ENCODE measurements at regions of chr12 and their contacts with region 1.

Region 1: DNA sequence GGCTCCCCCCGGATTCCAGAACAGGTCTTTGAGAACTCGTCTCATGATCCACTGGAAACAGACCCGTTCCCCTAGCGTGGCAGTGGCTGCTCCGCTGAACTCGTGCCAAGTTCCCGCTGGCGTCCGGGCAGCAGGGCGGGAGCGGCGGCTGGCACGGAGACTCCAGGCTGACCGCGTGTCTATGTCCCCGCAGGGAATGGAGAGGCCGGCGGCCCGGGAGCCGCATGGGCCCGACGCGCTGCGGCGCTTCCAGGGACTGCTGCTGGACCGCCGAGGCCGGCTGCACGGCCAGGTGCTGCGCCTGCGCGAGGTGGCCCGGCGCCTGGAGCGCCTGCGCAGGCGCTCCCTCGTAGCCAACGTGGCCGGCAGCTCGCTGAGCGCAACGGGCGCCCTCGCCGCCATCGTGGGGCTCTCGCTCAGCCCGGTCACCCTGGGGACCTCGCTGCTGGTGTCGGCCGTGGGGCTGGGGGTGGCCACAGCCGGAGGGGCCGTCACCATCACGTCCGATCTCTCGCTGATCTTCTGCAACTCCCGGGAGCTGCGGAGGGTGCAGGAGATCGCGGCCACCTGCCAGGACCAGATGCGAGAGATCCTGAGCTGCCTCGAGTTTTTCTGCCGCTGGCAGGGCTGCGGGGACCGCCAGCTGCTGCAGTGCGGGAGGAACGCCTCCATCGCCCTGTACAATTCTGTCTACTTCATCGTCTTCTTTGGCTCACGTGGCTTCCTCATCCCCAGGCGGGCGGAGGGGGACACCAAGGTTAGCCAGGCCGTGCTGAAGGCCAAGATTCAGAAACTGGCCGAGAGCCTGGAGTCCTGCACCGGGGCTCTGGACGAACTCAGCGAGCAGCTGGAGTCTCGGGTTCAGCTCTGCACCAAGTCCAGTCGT is 1.5 kb downstream of the APOLD1 start:
- DNase-seq: peak; percentile 47 to 90 (median 71)
- ATAC-seq: peak; percentile 90
- H3K4me3 ChIP-seq: peak overlapping the region; percentile 68 to 70
- H3K4me3 Mint-ChIP-seq: peak overlapping the region; percentile 77
- H3K27ac ChIP-seq: peak overlapping the region; percentile 72 to 73
- H3K27ac Mint-ChIP-seq: peak overlapping the region; percentile 87
- H3K4me1 ChIP-seq: peaks cover 16% of the 10 kb centered on the region
- H3K4me1 Mint-ChIP-seq: peaks cover 22% of the 10 kb centered on the region
- H3K27me3 ChIP-seq: no peaks in the 10 kb centered on the region
- H3K27me3 Mint-ChIP-seq: no peaks in the 10 kb centered on the region
- CTCF ChIP-seq: no peak

Region 2: DNA sequence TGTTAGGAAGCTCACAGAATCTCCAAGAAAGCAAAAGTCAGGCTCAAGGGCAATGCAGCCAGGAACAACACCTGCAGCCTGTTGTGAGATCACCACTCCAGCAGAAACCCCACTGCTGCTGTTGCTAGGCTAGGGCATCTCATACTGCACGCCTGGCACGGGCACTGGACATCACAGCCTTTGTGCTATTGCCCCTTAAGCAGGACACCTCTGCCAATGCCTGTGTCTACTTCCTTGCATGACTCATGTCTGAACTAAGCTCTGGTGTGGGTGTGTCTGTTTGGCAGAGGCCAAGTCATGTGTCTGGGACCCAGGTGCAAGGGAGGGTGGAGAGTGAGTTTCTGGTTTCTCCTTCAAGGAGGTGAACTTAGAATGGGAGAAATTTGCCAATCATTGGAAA is 16.2 kb after region 1 on chr12:
- CTCF ChIA-PET with region 1: interaction called, 83 read pairs
- POLR2A ChIA-PET with region 1: interaction called, 17 read pairs
- intact Hi-C with region 1: loop called (anchors 1 kb)
- DNase-seq: peak in 5 of 9 experiments; percentile 28 to 46 (median 38)
- ATAC-seq: peak; percentile 35
- H3K4me3 ChIP-seq: no peak overlapping the region
- H3K4me3 Mint-ChIP-seq: no peak overlapping the region
- H3K27ac ChIP-seq: no peak overlapping the region
- H3K27ac Mint-ChIP-seq: peak overlapping the region; percentile 73
- H3K4me1 ChIP-seq: peaks cover 22% of the 10 kb centered on the region
- H3K4me1 Mint-ChIP-seq: peaks cover 41% of the 10 kb centered on the region
- H3K27me3 ChIP-seq: no peaks in the 10 kb centered on the region
- H3K27me3 Mint-ChIP-seq: no peaks in the 10 kb centered on the region
- CTCF ChIP-seq: no peak

Region 3: GRCh38 chr12:12823292-12823691 is 36.3 kb after region 1 on chr12:
- CTCF ChIA-PET with region 1: interaction called, 10 read pairs
- POLR2A ChIA-PET with region 1: no interaction called
- intact Hi-C with region 1: no loop called
- DNase-seq: no peak
- ATAC-seq: no peak
- H3K4me3 ChIP-seq: no peak overlapping the region
- H3K4me3 Mint-ChIP-seq: no peak overlapping the region
- H3K27ac ChIP-seq: no peak overlapping the region
- H3K27ac Mint-ChIP-seq: no peak overlapping the region
- H3K4me1 ChIP-seq: no peaks in the 10 kb centered on the region
- H3K4me1 Mint-ChIP-seq: peaks cover 20% of the 10 kb centered on the region
- H3K27me3 ChIP-seq: no peaks in the 10 kb centered on the region
- H3K27me3 Mint-ChIP-seq: no peaks in the 10 kb centered on the region
- CTCF ChIP-seq: no peak

Region 4: GRCh38 chr12:12909228-12909994 is 122.5 kb after region 1 on chr12:
- CTCF ChIA-PET with region 1: interaction called, 3 read pairs
- POLR2A ChIA-PET with region 1: no interaction called
- intact Hi-C with region 1: loop called in 1 of 2 experiments (anchors 2 kb)
- DNase-seq: no peak
- ATAC-seq: no peak
- H3K4me3 ChIP-seq: no peak overlapping the region
- H3K4me3 Mint-ChIP-seq: peak overlapping the region; percentile 1
- H3K27ac ChIP-seq: no peak overlapping the region
- H3K27ac Mint-ChIP-seq: no peak overlapping the region
- H3K4me1 ChIP-seq: peaks cover 16% of the 10 kb centered on the region
- H3K4me1 Mint-ChIP-seq: peaks cover 17% of the 10 kb centered on the region
- H3K27me3 ChIP-seq: peaks cover 0 to 3% of the 10 kb centered on the region in 2 experiments
- H3K27me3 Mint-ChIP-seq: no peaks in the 10 kb centered on the region
- CTCF ChIP-seq: no peak

Region 5: GRCh38 chr12:12983420-12984035 is 196.6 kb after region 1 on chr12:
- CTCF ChIA-PET with region 1: no interaction called
- POLR2A ChIA-PET with region 1: no interaction called
- intact Hi-C with region 1: loop called in 1 of 2 experiments (anchors 1 kb)
- DNase-seq: peak in 1 of 9 experiments; percentile 25
- ATAC-seq: no peak
- H3K4me3 ChIP-seq: no peak overlapping the region
- H3K4me3 Mint-ChIP-seq: no peak overlapping the region
- H3K27ac ChIP-seq: no peak overlapping the region
- H3K27ac Mint-ChIP-seq: no peak overlapping the region
- H3K4me1 ChIP-seq: no peaks in the 10 kb centered on the region
- H3K4me1 Mint-ChIP-seq: no peaks in the 10 kb centered on the region
- H3K27me3 ChIP-seq: no peaks in the 10 kb centered on the region
- H3K27me3 Mint-ChIP-seq: no peaks in the 10 kb centered on the region
- CTCF ChIP-seq: no peak

Region 6: DNA sequence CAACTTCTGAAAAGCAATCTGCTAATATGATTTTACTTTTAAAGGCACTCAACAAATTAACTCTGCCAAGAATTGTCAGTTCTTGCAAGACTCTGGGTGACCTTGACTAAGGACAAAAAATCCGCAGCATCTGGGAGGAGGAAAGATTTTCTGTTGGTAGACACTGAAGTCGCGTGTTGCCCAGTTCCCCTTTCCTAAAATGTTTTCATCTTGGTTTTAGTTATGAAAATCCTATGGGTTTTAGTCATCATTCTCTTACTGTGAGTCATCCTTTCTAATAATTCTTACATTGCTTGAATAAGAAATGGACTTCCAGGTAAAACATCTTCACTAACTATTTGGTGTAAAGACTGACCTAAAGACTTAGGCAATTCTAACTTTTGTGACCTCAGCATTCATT is 307.4 kb after region 1 on chr12:
- CTCF ChIA-PET with region 1: no interaction called
- POLR2A ChIA-PET with region 1: no interaction called
- intact Hi-C with region 1: loop called in 1 of 2 experiments (anchors 1 kb)
- DNase-seq: peak in 1 of 9 experiments; percentile 21
- ATAC-seq: no peak
- H3K4me3 ChIP-seq: no peak overlapping the region
- H3K4me3 Mint-ChIP-seq: no peak overlapping the region
- H3K27ac ChIP-seq: no peak overlapping the region
- H3K27ac Mint-ChIP-seq: no peak overlapping the region
- H3K4me1 ChIP-seq: peaks cover 14% of the 10 kb centered on the region
- H3K4me1 Mint-ChIP-seq: peaks cover 15% of the 10 kb centered on the region
- H3K27me3 ChIP-seq: no peaks in the 10 kb centered on the region
- H3K27me3 Mint-ChIP-seq: peaks cover 4% of the 10 kb centered on the region
- CTCF ChIP-seq: no peak